OCI-LY7 (cell line): ENCODE measurements at regions of chr7 and their contacts with region 1.

Region 1: GRCh38 chr7:124934841-124935240 is 5.2 kb upstream of the POT1 start:
- DNase-seq: no peak
- H3K4me3 ChIP-seq: no peak overlapping the region
- H3K27ac ChIP-seq: no peak overlapping the region
- H3K4me1 ChIP-seq: no peaks in the 10 kb centered on the region
- CTCF ChIP-seq: no peak

Region 2: GRCh38 chr7:124919488-124920230 is 15.2 kb before region 1 on chr7:
- CTCF ChIA-PET with region 1: no interaction called
- POLR2A ChIA-PET with region 1: interaction called, 20 read pairs
- intact Hi-C with region 1: no loop called
- DNase-seq: no peak
- H3K4me3 ChIP-seq: no peak overlapping the region
- H3K27ac ChIP-seq: no peak overlapping the region
- H3K4me1 ChIP-seq: peaks cover 3% of the 10 kb centered on the region
- CTCF ChIP-seq: no peak